B cell (primary cell): ENCODE measurements at regions of chr5 and their contacts with region 1.

Region 1: GRCh38 chr5:127092690-127093089 is 19.4 kb upstream of the C5orf63 start:
- DNase-seq: no peak
- ATAC-seq: no peak
- H3K4me3 ChIP-seq: no peak overlapping the region
- H3K4me3 Mint-ChIP-seq: no peak overlapping the region
- H3K27ac ChIP-seq: no peak overlapping the region
- H3K27ac Mint-ChIP-seq: no peak overlapping the region
- H3K4me1 ChIP-seq: peaks cover 0 to 5% of the 10 kb centered on the region in 2 donors
- H3K4me1 Mint-ChIP-seq: peaks cover 8% of the 10 kb centered on the region
- H3K27me3 ChIP-seq: no peaks in the 10 kb centered on the region
- H3K27me3 Mint-ChIP-seq: peaks cover 3% of the 10 kb centered on the region
- CTCF ChIP-seq: no peak

Region 2: GRCh38 chr5:127153031-127153430 is 60.3 kb after region 1 on chr5:
- CTCF ChIA-PET with region 1: no interaction called
- POLR2A ChIA-PET with region 1: no interaction called
- intact Hi-C with region 1: loop called (anchors 5 kb)
- DNase-seq: no peak
- ATAC-seq: no peak
- H3K4me3 ChIP-seq: no peak overlapping the region
- H3K4me3 Mint-ChIP-seq: no peak overlapping the region
- H3K27ac ChIP-seq: no peak overlapping the region
- H3K27ac Mint-ChIP-seq: no peak overlapping the region
- H3K4me1 ChIP-seq: no peaks in the 10 kb centered on the region
- H3K4me1 Mint-ChIP-seq: no peaks in the 10 kb centered on the region
- H3K27me3 ChIP-seq: no peaks in the 10 kb centered on the region
- H3K27me3 Mint-ChIP-seq: peaks cover 7% of the 10 kb centered on the region
- CTCF ChIP-seq: no peak